CD4-positive, alpha-beta T cell (primary cell): ENCODE measurements at regions of chr3 and their contacts with region 1.

Region 1: DNA sequence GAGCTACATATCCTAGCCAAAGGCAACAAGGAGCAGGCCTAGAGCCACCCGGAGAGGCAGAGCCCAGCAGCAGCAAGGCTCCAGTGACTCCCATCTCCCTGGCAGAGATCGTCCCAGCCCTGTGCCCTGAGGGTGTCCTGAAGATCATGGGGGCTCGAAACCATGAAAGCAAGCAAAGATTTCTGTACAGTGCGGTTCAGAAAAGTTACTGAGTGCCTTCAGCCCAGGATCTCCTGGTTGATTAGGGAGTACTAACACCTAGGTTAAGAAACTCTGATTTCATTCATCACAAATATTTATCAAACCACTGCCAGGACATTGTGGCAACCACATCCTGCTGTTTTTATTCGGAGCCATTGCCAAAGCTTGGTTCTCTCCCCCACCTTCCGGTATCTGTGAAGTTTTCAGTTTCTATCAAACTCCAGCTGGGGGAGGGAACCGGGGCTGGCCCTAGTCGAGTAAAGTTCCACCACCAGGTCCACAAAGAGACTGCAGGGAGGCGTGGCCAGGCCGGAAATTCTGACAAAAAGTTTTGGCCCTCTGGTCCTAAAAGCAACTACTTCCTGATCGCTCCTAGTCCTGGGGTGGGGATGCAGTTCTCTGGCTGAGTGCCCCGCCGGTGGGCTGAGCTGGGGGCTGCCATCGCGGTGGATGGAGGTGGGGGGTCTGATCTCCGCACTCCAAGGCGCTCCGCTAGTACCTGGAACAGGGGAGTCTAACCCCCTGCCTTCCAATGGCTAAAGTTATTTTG is 1.2 kb downstream of the RAB43 start:
- DNase-seq: peak; percentile 78 to 98 (median 87)
- ATAC-seq: peak; percentile 61
- H3K4me3 ChIP-seq: peak overlapping the region; percentile 93
- H3K4me3 Mint-ChIP-seq: peak overlapping the region; percentile 95
- H3K27ac ChIP-seq: peak overlapping the region; percentile 82 to 90
- H3K27ac Mint-ChIP-seq: peak overlapping the region; percentile 89
- H3K4me1 ChIP-seq: peaks cover 68% of the 10 kb centered on the region
- H3K4me1 Mint-ChIP-seq: peaks cover 51% of the 10 kb centered on the region
- H3K27me3 ChIP-seq: no peaks in the 10 kb centered on the region
- H3K27me3 Mint-ChIP-seq: no peaks in the 10 kb centered on the region
- CTCF ChIP-seq: peak; percentile 36

Region 2: DNA sequence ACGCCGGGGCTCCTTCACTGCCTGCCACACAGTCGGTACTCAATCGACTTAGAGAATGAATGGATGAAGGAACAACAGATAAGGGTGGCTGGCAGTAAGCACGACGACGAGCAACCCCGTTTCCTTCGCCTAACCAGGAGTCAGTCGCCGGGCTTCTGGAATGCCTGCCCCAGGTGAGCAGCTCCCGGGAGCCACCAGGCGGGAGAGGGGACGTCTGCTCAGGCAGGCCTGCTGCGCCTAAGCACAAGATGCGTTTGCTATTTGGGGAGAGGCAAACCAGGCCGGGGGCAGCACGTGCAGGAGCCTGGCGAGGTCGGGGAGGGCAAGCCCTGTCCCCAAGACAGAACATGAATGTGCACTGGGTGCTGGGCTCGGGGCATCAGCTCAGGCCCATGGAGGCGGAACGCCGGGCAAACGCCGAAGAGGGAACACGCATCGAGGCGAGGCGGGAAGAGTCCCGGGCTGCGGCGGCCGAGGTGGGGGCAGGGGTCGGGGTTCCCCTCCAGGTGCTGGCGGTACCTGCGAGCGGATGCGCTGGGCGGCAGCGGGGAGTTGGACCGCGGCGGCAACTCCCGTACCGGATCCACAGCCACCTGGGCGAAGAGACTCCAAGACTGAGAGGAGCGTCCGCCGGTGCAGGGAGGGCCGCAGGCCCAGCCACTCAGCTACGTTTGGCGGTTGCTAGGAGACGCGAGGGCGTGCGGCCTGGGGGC is 126.8 kb before region 1 on chr3 and contains the start of gene CFAP92:
- CTCF ChIA-PET with region 1: no interaction called
- POLR2A ChIA-PET with region 1: interaction called, 18 read pairs
- intact Hi-C with region 1: no loop called
- DNase-seq: peak; percentile 85 to 96 (median 90)
- ATAC-seq: peak; percentile 97
- H3K4me3 ChIP-seq: peak within 1 kb of the TSS; percentile 48
- H3K4me3 Mint-ChIP-seq: peak within 1 kb of the TSS; percentile 80
- H3K27ac ChIP-seq: peak within 1 kb of the TSS; percentile 30 to 38
- H3K27ac Mint-ChIP-seq: peak within 1 kb of the TSS; percentile 78
- H3K4me1 ChIP-seq: peaks cover 30% of the 10 kb centered on the region
- H3K4me1 Mint-ChIP-seq: peaks cover 47% of the 10 kb centered on the region
- H3K27me3 ChIP-seq: no peaks in the 10 kb centered on the region
- H3K27me3 Mint-ChIP-seq: no peaks in the 10 kb centered on the region
- CTCF ChIP-seq: no peak
- total RNA-seq, gene CFAP92: 0.19 to 0.45 TPM

Region 3: GRCh38 chr3:129052675-129053074 is 67.8 kb before region 1 on chr3:
- CTCF ChIA-PET with region 1: interaction called, 33 read pairs
- POLR2A ChIA-PET with region 1: interaction called, 57 read pairs
- intact Hi-C with region 1: loop called (anchors 1 to 2 kb)
- DNase-seq: no peak
- ATAC-seq: no peak
- H3K4me3 ChIP-seq: no peak overlapping the region
- H3K4me3 Mint-ChIP-seq: no peak overlapping the region
- H3K27ac ChIP-seq: no peak overlapping the region
- H3K27ac Mint-ChIP-seq: no peak overlapping the region
- H3K4me1 ChIP-seq: peaks cover 5% of the 10 kb centered on the region
- H3K4me1 Mint-ChIP-seq: peaks cover 9% of the 10 kb centered on the region
- H3K27me3 ChIP-seq: no peaks in the 10 kb centered on the region
- H3K27me3 Mint-ChIP-seq: no peaks in the 10 kb centered on the region
- CTCF ChIP-seq: no peak

Region 4: GRCh38 chr3:129106331-129106730 is 14.1 kb before region 1 on chr3:
- CTCF ChIA-PET with region 1: interaction called, 7 read pairs
- POLR2A ChIA-PET with region 1: interaction called, 74 read pairs
- intact Hi-C with region 1: loop called in 1 of 2 experiments (anchors 1 kb)
- DNase-seq: no peak
- ATAC-seq: no peak
- H3K4me3 ChIP-seq: no peak overlapping the region
- H3K4me3 Mint-ChIP-seq: no peak overlapping the region
- H3K27ac ChIP-seq: peak overlapping the region in 1 of 2 donors; percentile 22
- H3K27ac Mint-ChIP-seq: peak overlapping the region; percentile 75
- H3K4me1 ChIP-seq: peaks cover 79% of the 10 kb centered on the region
- H3K4me1 Mint-ChIP-seq: peaks cover 86% of the 10 kb centered on the region
- H3K27me3 ChIP-seq: no peaks in the 10 kb centered on the region
- H3K27me3 Mint-ChIP-seq: no peaks in the 10 kb centered on the region
- CTCF ChIP-seq: no peak

Region 5: DNA sequence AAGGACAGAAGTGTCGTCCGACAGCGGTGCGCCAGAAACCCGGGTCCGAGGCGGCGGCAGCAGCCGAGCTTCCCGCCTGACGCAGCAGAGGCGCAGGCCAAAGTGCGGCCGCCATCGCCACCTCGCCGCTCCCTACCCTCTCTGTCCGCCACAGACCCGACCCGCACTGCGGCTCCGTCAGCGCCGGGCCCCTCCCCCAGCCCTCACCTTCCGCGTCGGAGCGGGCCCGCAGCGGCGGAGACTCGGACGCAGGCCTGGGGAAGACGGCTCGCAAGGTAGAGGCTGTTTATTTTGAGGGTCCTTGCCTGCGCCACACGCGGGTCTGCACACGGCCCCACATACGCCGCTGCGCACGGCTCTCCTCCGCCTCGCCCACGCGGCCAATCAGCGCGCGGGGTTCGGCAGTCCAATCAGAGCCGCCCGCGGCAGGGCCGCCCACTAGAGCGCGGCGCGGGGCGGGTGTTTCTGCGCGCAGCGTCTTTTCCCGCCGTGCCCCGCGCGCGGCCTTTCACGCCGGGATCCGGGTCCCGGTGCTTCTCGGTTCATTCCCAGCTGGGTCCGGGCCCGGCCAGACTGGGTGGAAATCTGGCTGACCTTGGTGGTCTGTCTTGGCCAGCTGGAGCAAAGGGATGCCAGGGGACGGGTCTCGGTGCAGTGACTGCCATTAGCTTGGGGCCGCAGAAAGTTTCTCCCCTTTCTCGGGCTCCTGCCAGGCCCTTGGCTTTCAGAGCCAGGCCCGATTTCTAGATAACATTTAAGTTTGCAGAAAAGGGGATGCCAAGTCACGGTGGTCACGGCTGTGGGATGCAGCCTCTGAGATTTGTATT is 63.4 kb after region 1 on chr3 and contains the start of gene CNBP:
- CTCF ChIA-PET with region 1: no interaction called
- POLR2A ChIA-PET with region 1: interaction called, 120 read pairs
- intact Hi-C with region 1: loop called (anchors 2 kb)
- DNase-seq: peak; percentile 82 to 97 (median 91)
- ATAC-seq: peak; percentile 95
- H3K4me3 ChIP-seq: peak within 1 kb of the TSS; percentile 68
- H3K4me3 Mint-ChIP-seq: peak within 1 kb of the TSS; percentile 100
- H3K27ac ChIP-seq: peak within 1 kb of the TSS; percentile 91 to 95
- H3K27ac Mint-ChIP-seq: peak within 1 kb of the TSS; percentile 100
- H3K4me1 ChIP-seq: peaks cover 37% of the 10 kb centered on the region
- H3K4me1 Mint-ChIP-seq: peaks cover 49% of the 10 kb centered on the region
- H3K27me3 ChIP-seq: no peaks in the 10 kb centered on the region
- H3K27me3 Mint-ChIP-seq: no peaks in the 10 kb centered on the region
- CTCF ChIP-seq: no peak
- total RNA-seq, gene CNBP: 260 to 267 TPM

Region 6: GRCh38 chr3:129316131-129317013 is 195.9 kb after region 1 on chr3:
- CTCF ChIA-PET with region 1: no interaction called
- POLR2A ChIA-PET with region 1: interaction called, 48 read pairs
- intact Hi-C with region 1: no loop called
- DNase-seq: peak; percentile 82 to 94 (median 91)
- ATAC-seq: peak; percentile 41
- H3K4me3 ChIP-seq: peak overlapping the region; percentile 92
- H3K4me3 Mint-ChIP-seq: peak overlapping the region; percentile 96
- H3K27ac ChIP-seq: peak overlapping the region; percentile 15 to 67
- H3K27ac Mint-ChIP-seq: peak overlapping the region; percentile 82
- H3K4me1 ChIP-seq: peaks cover 32% of the 10 kb centered on the region
- H3K4me1 Mint-ChIP-seq: peaks cover 28% of the 10 kb centered on the region
- H3K27me3 ChIP-seq: no peaks in the 10 kb centered on the region
- H3K27me3 Mint-ChIP-seq: no peaks in the 10 kb centered on the region
- CTCF ChIP-seq: peak; percentile 80